ENCODE measurements at regions of chr2 and their contacts with region 1.

Region 1: GRCh38 chr2:219521066-219521880 is 7.0 kb downstream of the ASIC4 start:
- DNase-seq: peak; percentile 37
- ATAC-seq: peak; percentile 78
- H3K4me3 ChIP-seq: no peak overlapping the region
- H3K27ac ChIP-seq: peak overlapping the region; percentile 26
- H3K4me1 ChIP-seq: peaks cover 16% of the 10 kb centered on the region
- H3K27me3 ChIP-seq: peaks cover 33% of the 10 kb centered on the region
- CTCF ChIP-seq: peak; percentile 70
- POLR2A ChIP-seq: no peak
- RAD21 ChIP-seq: peak; percentile 58

Region 2: DNA sequence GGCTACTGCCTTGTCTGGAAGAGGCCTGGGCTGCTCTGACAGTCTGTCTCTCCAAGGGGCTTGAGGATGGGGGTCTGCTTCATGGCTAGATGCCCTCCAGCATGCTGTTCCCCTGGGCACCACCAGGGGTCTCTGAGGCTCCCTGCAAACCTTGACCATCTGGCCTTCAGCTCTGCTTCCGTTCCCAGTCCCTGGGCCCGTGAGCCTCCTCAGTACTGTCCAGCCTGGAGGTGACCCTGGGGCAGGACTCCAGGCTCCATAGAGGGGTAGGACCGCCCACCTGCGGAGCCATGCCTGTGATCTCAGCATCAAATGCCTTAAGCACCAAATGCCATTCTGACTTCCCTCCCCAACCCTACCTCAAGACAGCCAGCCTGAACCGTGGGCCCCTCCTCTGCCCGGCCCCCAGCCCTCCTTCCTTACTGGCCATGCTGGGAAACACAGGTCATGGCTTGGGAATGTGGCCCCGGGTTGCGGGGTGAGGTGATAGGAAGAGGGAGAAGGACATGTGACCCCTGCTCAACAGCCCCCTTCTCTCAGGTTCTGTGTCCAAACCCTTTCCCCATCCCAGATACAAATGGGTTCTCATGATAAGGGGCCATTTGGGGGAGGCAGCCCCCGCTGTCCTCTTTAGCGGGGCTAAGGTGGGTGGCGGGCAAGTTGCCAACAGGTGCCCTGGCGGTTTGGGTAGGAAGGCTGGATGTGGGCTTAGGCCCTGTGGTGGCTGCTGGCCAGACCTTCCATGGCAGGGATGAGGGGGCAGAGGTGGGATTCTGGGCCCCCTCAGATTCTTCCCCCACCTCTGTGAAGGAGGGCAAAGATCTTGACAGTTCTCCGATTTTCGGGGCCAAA is 61.6 kb before region 1 on chr2:
- CTCF ChIA-PET with region 1: interaction called, 3 read pairs
- POLR2A ChIA-PET with region 1: no interaction called
- dilution Hi-C with region 1: no loop called
- in situ Hi-C with region 1: no loop called
- intact Hi-C with region 1: loop called (anchors 5 kb)
- DNase-seq: peak; percentile 63
- ATAC-seq: peak; percentile 72
- H3K4me3 ChIP-seq: no peak overlapping the region
- H3K27ac ChIP-seq: peak overlapping the region; percentile 90
- H3K4me1 ChIP-seq: peaks cover 24% of the 10 kb centered on the region
- H3K27me3 ChIP-seq: no peaks in the 10 kb centered on the region
- CTCF ChIP-seq: peak; percentile 78
- POLR2A ChIP-seq: no peak
- RAD21 ChIP-seq: peak; percentile 72

Region 3: DNA sequence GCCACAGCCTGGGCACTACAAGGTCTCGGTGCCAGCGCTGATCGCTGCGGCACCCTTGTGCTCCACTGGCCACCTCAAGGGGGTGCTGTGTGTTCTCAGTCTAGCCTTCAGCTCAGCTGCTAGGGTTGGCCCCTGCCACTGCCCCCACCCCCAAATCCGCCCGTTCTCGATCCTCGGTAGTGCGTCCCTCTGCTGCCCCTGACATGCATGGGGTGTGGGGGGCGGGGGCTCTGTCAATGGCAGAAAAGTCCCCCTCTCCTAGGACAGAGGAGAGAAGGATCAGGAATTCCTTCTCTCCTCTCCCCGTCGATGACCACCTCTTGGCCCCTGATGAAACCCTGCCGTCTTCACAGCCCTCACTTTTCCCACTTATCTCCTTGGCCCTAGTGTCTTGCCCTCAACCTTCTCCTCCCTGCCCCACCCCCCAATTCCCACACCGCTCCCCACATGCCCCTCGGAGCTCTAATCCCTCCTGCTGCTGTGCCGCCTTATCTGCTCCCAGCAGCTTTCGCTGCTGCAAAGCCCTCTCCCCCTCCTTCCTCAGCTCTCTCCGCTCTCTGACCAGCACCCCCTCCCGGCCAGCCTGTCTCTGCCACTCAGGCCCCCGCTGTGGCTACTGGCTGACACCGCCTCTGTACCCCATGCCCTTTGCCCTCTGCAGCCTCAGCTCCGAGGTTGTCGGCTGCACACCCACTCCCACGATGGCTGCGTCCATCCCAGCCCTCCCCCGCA is 11.3 kb before region 1 on chr2:
- CTCF ChIA-PET with region 1: interaction called, 12 read pairs
- POLR2A ChIA-PET with region 1: interaction called, 3 read pairs
- dilution Hi-C with region 1: no loop called
- in situ Hi-C with region 1: no loop called
- intact Hi-C with region 1: no loop called
- DNase-seq: peak; percentile 45
- ATAC-seq: peak; percentile 85
- H3K4me3 ChIP-seq: peak overlapping the region; percentile 26
- H3K27ac ChIP-seq: no peak overlapping the region
- H3K4me1 ChIP-seq: peaks cover 8% of the 10 kb centered on the region; the same call in 1 of the 2 replicates
- H3K27me3 ChIP-seq: peaks cover 46% of the 10 kb centered on the region
- CTCF ChIP-seq: peak; percentile 67
- POLR2A ChIP-seq: no peak
- RAD21 ChIP-seq: peak; percentile 42